Heart right ventricle (tissue), 16 donors: ENCODE measurements at regions of chr10 and their contacts with region 1.

Region 1: GRCh38 chr10:103781329-103782061 is 73.9 kb downstream of the SH3PXD2A start:
- DNase-seq: no peak
- ATAC-seq: no peak
- H3K4me3 ChIP-seq: no peak overlapping the region
- H3K27ac ChIP-seq: no peak overlapping the region
- H3K4me1 ChIP-seq: peaks cover 14 to 66% (median 47%) of the 10 kb centered on the region in 9 donors
- H3K27me3 ChIP-seq: no peaks in the 10 kb centered on the region
- CTCF ChIP-seq: peak in 5 of 9 donors; percentile 11 to 41 (median 23)

Region 2: GRCh38 chr10:103564776-103565520 is 216.5 kb before region 1 on chr10:
- intact Hi-C with region 1: no loop called
- DNase-seq: no peak
- ATAC-seq: peak in 4 of 8 donors; percentile 16 to 54 (median 42)
- H3K4me3 ChIP-seq: no peak overlapping the region
- H3K27ac ChIP-seq: no peak overlapping the region
- H3K4me1 ChIP-seq: no peaks in the 10 kb centered on the region
- H3K27me3 ChIP-seq: peaks cover 0 to 10% (median 0%) of the 10 kb centered on the region in 7 donors
- CTCF ChIP-seq: peak in 8 of 9 donors; percentile 30 to 68 (median 50)

Region 3: GRCh38 chr10:103727546-103727963 is 53.9 kb before region 1 on chr10:
- intact Hi-C with region 1: loop called in 1 of 10 experiments (anchors 5 kb)
- DNase-seq: peak; percentile 42 to 56
- ATAC-seq: peak; percentile 83 to 94 (median 88)
- H3K4me3 ChIP-seq: no peak overlapping the region
- H3K27ac ChIP-seq: peak overlapping the region in 6 of 10 donors; percentile 10 to 73 (median 47)
- H3K4me1 ChIP-seq: peaks cover 0 to 27% (median 13%) of the 10 kb centered on the region in 9 donors
- H3K27me3 ChIP-seq: no peaks in the 10 kb centered on the region
- CTCF ChIP-seq: no peak

Region 4: GRCh38 chr10:103839872-103840746 is 58.6 kb after region 1 on chr10:
- intact Hi-C with region 1: loop called in 1 of 10 experiments (anchors 5 kb)
- DNase-seq: peak; percentile 69 to 80
- ATAC-seq: peak; percentile 45 to 76 (median 56)
- H3K4me3 ChIP-seq: no peak overlapping the region
- H3K27ac ChIP-seq: peak overlapping the region; percentile 27 to 87 (median 78)
- H3K4me1 ChIP-seq: peaks cover 27 to 97% (median 87%) of the 10 kb centered on the region in 9 donors
- H3K27me3 ChIP-seq: no peaks in the 10 kb centered on the region
- CTCF ChIP-seq: no peak